Natural killer cell (primary cell): ENCODE measurements at regions of chr17 and their contacts with region 1.

Region 1: DNA sequence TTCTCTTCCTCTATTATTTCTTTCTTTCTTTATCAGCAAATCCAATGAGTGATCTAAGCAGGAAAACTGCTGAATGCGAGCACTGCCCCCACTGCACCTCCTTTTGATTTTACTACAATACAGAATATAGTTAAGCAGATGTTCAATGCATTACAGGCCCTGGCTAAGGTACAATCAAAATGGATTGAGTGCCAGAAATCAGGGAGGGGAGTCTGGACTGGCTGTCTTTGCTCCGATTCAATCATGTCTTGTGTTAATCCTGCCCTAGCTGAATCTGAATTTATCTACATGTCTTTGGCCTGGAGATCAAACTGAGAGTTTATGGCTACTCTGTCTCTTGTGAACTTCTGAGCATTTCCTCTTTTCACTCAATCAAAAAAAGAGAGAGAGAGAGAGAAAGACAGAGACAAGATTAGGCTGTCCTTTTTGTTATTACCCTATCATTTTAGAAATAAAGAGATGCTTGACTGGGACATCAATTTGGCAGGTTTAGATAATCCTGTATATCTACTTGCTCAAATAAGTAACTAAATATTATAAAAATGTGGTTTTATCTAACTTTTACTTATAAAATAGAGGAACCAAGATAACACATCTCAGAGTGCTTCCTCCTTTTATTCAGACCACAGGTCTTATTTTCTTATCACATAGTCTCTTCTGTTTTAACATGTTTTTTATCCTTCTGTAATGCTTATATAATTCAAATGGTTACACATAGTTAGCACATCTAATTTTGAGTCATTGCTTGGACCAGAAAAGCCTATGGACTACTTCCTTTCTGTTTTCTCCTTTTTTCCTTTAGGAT is 656.2 kb downstream of the KCNJ2 start:
- DNase-seq: no peak
- ATAC-seq: no peak
- H3K4me3 ChIP-seq: no peak overlapping the region
- H3K4me3 Mint-ChIP-seq: no peak overlapping the region
- H3K27ac ChIP-seq: no peak overlapping the region
- H3K27ac Mint-ChIP-seq: no peak overlapping the region
- H3K4me1 ChIP-seq: no peaks in the 10 kb centered on the region
- H3K4me1 Mint-ChIP-seq: no peaks in the 10 kb centered on the region
- H3K27me3 ChIP-seq: no peaks in the 10 kb centered on the region
- H3K27me3 Mint-ChIP-seq: no peaks in the 10 kb centered on the region
- CTCF ChIP-seq: no peak

Region 2: GRCh38 chr17:70577456-70577855 is 248.1 kb before region 1 on chr17:
- intact Hi-C with region 1: no loop called
- DNase-seq: no peak
- ATAC-seq: no peak
- H3K4me3 ChIP-seq: no peak overlapping the region
- H3K4me3 Mint-ChIP-seq: no peak overlapping the region
- H3K27ac ChIP-seq: no peak overlapping the region
- H3K27ac Mint-ChIP-seq: no peak overlapping the region
- H3K4me1 ChIP-seq: no peaks in the 10 kb centered on the region
- H3K4me1 Mint-ChIP-seq: no peaks in the 10 kb centered on the region
- H3K27me3 ChIP-seq: no peaks in the 10 kb centered on the region
- H3K27me3 Mint-ChIP-seq: no peaks in the 10 kb centered on the region
- CTCF ChIP-seq: no peak

Region 3: GRCh38 chr17:70882504-70882903 is 57.0 kb after region 1 on chr17:
- intact Hi-C with region 1: loop called (anchors 10 kb)
- DNase-seq: no peak
- ATAC-seq: no peak
- H3K4me3 ChIP-seq: no peak overlapping the region
- H3K4me3 Mint-ChIP-seq: no peak overlapping the region
- H3K27ac ChIP-seq: no peak overlapping the region
- H3K27ac Mint-ChIP-seq: no peak overlapping the region
- H3K4me1 ChIP-seq: no peaks in the 10 kb centered on the region
- H3K4me1 Mint-ChIP-seq: no peaks in the 10 kb centered on the region
- H3K27me3 ChIP-seq: no peaks in the 10 kb centered on the region
- H3K27me3 Mint-ChIP-seq: no peaks in the 10 kb centered on the region
- CTCF ChIP-seq: no peak